Right ventricle myocardium superior (tissue), 1 donor: ENCODE measurements at regions of chr19 and their contacts with region 1.

Region 1: DNA sequence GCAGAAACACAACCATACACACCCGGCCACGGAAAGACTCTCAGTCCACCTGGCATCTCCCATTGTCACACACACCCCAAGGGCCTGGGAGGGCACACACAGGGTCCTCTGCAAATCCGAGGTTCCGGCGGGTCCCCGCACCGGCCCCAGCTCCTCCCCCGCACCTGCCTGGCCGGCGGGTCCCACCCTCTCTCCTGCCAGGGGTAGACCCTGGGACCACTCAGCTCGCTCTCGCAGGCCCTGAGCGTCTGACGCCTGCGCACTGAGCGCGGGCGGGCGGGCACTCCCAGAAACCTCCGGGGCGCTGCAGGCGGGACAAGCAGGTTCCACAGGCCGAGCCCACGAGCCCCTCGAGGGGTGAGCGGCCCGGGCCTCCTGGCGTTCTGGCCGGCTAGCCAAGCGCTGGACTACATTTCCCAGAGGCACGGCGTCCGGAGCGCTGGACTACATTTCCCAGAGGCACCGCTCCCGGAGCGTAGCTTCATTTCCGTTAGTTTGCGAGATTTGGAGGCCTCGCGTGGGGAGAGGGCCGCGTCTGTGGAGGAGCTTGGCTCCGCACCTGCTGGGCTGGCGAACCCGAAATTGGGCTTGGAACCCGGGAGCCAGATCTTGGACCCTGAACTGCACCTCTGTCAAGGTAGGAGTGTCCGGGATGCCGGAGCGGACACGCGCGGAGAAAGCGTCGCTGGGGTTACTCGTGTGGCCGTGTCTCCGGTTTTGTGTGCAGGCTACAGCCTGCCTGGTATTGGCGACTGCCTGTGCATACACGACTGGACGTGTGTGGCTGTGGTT is at the start of gene ZNF420:
- DNase-seq: peak; percentile 96
- ATAC-seq: peak; percentile 99
- total RNA-seq, gene ZNF420: 8.5 TPM

Region 2: GRCh38 chr19:37007587-37008220 is 70.4 kb before region 1 on chr19:
- intact Hi-C with region 1: loop called (anchors 10 kb)
- DNase-seq: peak; percentile 89
- ATAC-seq: peak; percentile 96